CD14-positive monocyte (primary cell): ENCODE measurements at regions of chr12 and their contacts with region 1.

Region 1: DNA sequence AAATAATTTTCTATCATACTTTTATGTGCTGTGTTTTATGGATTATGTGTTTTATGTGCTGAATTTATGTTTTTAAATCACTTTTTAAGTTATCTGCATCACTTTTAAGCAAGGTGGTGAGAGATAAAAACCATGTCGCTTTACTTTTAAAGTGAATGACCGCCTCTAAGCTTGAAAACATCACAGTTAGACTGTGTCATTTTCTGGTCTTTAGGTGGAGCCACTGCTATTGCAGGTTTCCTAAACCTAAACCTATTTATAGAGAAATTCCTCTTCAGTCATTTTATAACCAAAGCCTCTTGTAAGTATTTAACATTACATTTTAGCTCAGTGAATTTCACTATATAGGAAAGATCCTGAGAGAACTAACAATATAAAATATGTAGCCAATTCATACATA is 21.0 kb upstream of the MDM2 start:
- DNase-seq: peak in 1 of 3 donors; percentile 15
- H3K4me3 ChIP-seq: peak overlapping the region in 1 of 3 experiments; percentile 53
- H3K4me3 Mint-ChIP-seq: no peak overlapping the region
- H3K27ac ChIP-seq: peak overlapping the region; percentile 88 to 96
- H3K27ac Mint-ChIP-seq: peak overlapping the region; percentile 96 to 99 (median 97)
- H3K4me1 ChIP-seq: peaks cover 63 to 64% of the 10 kb centered on the region in 2 donors
- H3K4me1 Mint-ChIP-seq: peaks cover 50% of the 10 kb centered on the region
- H3K27me3 ChIP-seq: no peaks in the 10 kb centered on the region
- H3K27me3 Mint-ChIP-seq: no peaks in the 10 kb centered on the region
- CTCF ChIP-seq: no peak

Region 2: DNA sequence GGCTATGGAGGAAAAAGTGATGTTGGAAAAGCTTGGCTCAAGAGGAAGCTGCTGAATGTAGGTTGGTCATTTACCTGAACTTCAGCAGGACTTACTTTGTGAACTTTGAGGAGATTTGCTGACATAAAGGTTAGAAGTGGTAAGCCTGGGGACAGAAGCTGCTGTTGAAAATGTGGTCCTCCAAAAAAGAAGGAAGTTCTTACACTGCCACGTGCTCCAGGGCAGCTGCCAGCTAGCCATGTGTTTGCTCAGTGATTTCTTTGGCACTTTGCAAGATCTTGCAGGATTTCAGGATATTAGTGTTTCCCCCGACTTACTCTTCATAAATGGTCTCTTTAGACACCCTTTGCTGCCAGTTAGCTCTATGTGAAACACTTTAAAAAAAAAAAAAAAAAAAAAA is 1153.2 kb before region 1 on chr12:
- intact Hi-C with region 1: no loop called
- DNase-seq: peak; percentile 21 to 45 (median 35)
- H3K4me3 ChIP-seq: no peak overlapping the region
- H3K4me3 Mint-ChIP-seq: no peak overlapping the region
- H3K27ac ChIP-seq: no peak overlapping the region
- H3K27ac Mint-ChIP-seq: no peak overlapping the region
- H3K4me1 ChIP-seq: peaks cover 18 to 24% of the 10 kb centered on the region in 2 donors
- H3K4me1 Mint-ChIP-seq: peaks cover 21% of the 10 kb centered on the region
- H3K27me3 ChIP-seq: peaks cover 0 to 2% of the 10 kb centered on the region in 2 donors
- H3K27me3 Mint-ChIP-seq: peaks cover 0 to 7% (median 4%) of the 10 kb centered on the region in 3 donors
- CTCF ChIP-seq: no peak

Region 3: GRCh38 chr12:68807576-68808387 is 20.9 kb after region 1 on chr12 and contains the start of gene MDM2:
- intact Hi-C with region 1: loop called in 1 of 2 experiments (anchors 1 kb)
- DNase-seq: peak; percentile 89 to 95 (median 95)
- H3K4me3 ChIP-seq: peak within 1 kb of the TSS; percentile 87 to 98 (median 97)
- H3K4me3 Mint-ChIP-seq: peak within 1 kb of the TSS; percentile 95 to 96
- H3K27ac ChIP-seq: peak within 1 kb of the TSS; percentile 98
- H3K27ac Mint-ChIP-seq: peak within 1 kb of the TSS; percentile 95 to 98 (median 98)
- H3K4me1 ChIP-seq: peaks cover 14 to 22% of the 10 kb centered on the region in 2 donors
- H3K4me1 Mint-ChIP-seq: peaks cover 28% of the 10 kb centered on the region
- H3K27me3 ChIP-seq: no peaks in the 10 kb centered on the region
- H3K27me3 Mint-ChIP-seq: peaks cover 0 to 4% (median 0%) of the 10 kb centered on the region in 3 donors
- CTCF ChIP-seq: peak; percentile 77
- polyA plus RNA-seq, gene MDM2: 16.2 to 39.9 (median 27.6) TPM